ENCODE measurements at regions of chr6 and their contacts with region 1.

Region 1: GRCh38 chr6:45421709-45422502 is 44.2 kb upstream of the SUPT3H start:
- DNase-seq: no peak
- ATAC-seq: peak; percentile 79
- H3K4me3 ChIP-seq: peak overlapping the region; percentile 54 to 86
- H3K27ac ChIP-seq: peak overlapping the region; percentile 81
- H3K4me1 ChIP-seq: peaks cover 25% of the 10 kb centered on the region
- H3K27me3 ChIP-seq: no peaks in the 10 kb centered on the region
- CTCF ChIP-seq: peak; percentile 64

Region 2: GRCh38 chr6:44630125-44631028 is 791.5 kb before region 1 on chr6:
- CTCF ChIA-PET with region 1: interaction called, 3 read pairs
- POLR2A ChIA-PET with region 1: no interaction called
- in situ Hi-C with region 1: no loop called
- intact Hi-C with region 1: loop called (anchors 5 kb)
- DNase-seq: no peak
- ATAC-seq: peak; percentile 84
- H3K4me3 ChIP-seq: no peak overlapping the region
- H3K27ac ChIP-seq: no peak overlapping the region
- H3K4me1 ChIP-seq: no peaks in the 10 kb centered on the region; the same call in 1 of the 2 replicates
- H3K27me3 ChIP-seq: peaks cover 2% of the 10 kb centered on the region; the same call in 1 of the 2 replicates
- CTCF ChIP-seq: peak; percentile 81

Region 3: GRCh38 chr6:44655412-44656342 is 766.2 kb before region 1 on chr6:
- CTCF ChIA-PET with region 1: interaction called, 3 read pairs
- POLR2A ChIA-PET with region 1: no interaction called
- in situ Hi-C with region 1: no loop called
- intact Hi-C with region 1: loop called (anchors 5 kb)
- DNase-seq: no peak
- ATAC-seq: peak; percentile 79
- H3K4me3 ChIP-seq: no peak overlapping the region
- H3K27ac ChIP-seq: peak overlapping the region; percentile 23; the same call in 1 of the 2 replicates
- H3K4me1 ChIP-seq: no peaks in the 10 kb centered on the region; the same call in 1 of the 2 replicates
- H3K27me3 ChIP-seq: no peaks in the 10 kb centered on the region
- CTCF ChIP-seq: peak; percentile 97

Region 4: DNA sequence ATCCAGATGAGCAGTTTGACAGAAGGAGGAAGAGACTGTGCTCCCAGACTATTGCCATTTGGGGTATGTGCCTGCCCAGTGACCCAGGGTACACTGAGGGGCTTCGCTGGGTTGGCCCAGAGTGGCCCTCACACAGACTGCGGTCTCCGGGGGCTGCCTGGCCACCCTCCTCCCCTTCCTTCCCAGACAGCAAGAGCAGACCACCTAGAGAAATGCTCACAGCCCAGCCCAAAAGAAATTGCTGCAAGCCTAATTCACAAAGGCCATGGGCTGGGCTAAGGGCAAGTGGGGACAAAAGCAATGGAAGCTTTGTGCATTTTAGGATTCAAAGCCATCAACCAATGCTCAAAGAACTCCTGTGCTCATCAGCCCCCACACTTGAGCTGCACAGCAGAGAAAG is 756.8 kb before region 1 on chr6:
- CTCF ChIA-PET with region 1: no interaction called
- POLR2A ChIA-PET with region 1: interaction called, 11 read pairs
- in situ Hi-C with region 1: no loop called
- intact Hi-C with region 1: no loop called
- DNase-seq: no peak
- ATAC-seq: no peak
- H3K4me3 ChIP-seq: no peak overlapping the region
- H3K27ac ChIP-seq: no peak overlapping the region
- H3K4me1 ChIP-seq: 0 out of 2 replicates have a peak, but pooled peaks cover 5% of the 10 kb centered on the region
- H3K27me3 ChIP-seq: no peaks in the 10 kb centered on the region
- CTCF ChIP-seq: no peak

Region 5: GRCh38 chr6:45714741-45715507 is 293.0 kb after region 1 on chr6:
- CTCF ChIA-PET with region 1: interaction called, 4 read pairs
- POLR2A ChIA-PET with region 1: no interaction called
- in situ Hi-C with region 1: no loop called
- intact Hi-C with region 1: loop called (anchors 2 kb)
- DNase-seq: peak; percentile 82
- ATAC-seq: peak; percentile 97
- H3K4me3 ChIP-seq: no peak overlapping the region
- H3K27ac ChIP-seq: peak overlapping the region; percentile 54; the same call in 1 of the 2 replicates
- H3K4me1 ChIP-seq: no peaks in the 10 kb centered on the region
- H3K27me3 ChIP-seq: no peaks in the 10 kb centered on the region
- CTCF ChIP-seq: peak; percentile 91

Region 6: GRCh38 chr6:45922728-45923351 is 500.9 kb after region 1 on chr6:
- CTCF ChIA-PET with region 1: no interaction called
- POLR2A ChIA-PET with region 1: no interaction called
- in situ Hi-C with region 1: no loop called
- intact Hi-C with region 1: loop called (anchors 10 kb)
- DNase-seq: peak; percentile 56
- ATAC-seq: peak; percentile 94
- H3K4me3 ChIP-seq: no peak overlapping the region
- H3K27ac ChIP-seq: no peak overlapping the region
- H3K4me1 ChIP-seq: no peaks in the 10 kb centered on the region
- H3K27me3 ChIP-seq: peaks cover 2% of the 10 kb centered on the region; the same call in 1 of the 2 replicates
- CTCF ChIP-seq: peak; percentile 89

Measured in Panc1 (cell line).